SK-N-SH (cell line): ENCODE measurements at regions of chr17 and their contacts with region 1.

Region 1: GRCh38 chr17:67475236-67475937 is 98.3 kb downstream of the PITPNC1 start:
- DNase-seq: peak; percentile 84
- H3K4me3 ChIP-seq: no peak overlapping the region
- H3K27ac ChIP-seq: peak overlapping the region; percentile 11 to 42; a peak in 2 of 4 replicates
- H3K4me1 ChIP-seq: peaks cover 4 to 14% of the 10 kb centered on the region in 2 experiments; a peak in 3 of 4 replicates
- H3K27me3 ChIP-seq: no peaks in the 10 kb centered on the region
- CTCF ChIP-seq: peak; percentile 99
- EP300 ChIP-seq: no peak
- RAD21 ChIP-seq: peak; percentile 100

Region 2: DNA sequence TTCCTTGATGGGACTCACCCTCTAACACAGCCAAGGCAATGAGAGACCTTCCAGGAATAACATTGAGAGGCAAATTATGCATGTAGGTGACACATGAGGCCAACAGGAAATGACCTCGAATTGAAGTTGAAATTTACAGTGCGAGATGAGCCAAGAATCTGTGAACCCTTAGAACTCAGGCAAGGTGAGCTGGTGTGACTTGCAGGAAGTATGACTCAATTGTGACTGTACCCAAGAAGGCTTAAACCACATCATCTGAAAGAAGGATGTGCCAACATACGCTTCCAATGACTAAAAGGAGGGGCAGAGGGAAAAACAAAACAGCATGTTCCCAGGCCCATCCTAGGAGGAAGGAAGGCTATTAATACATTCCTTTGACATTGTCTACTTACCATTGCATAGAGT is 53.5 kb before region 1 on chr17:
- CTCF ChIA-PET with region 1: interaction called, 17 read pairs
- POLR2A ChIA-PET with region 1: no interaction called
- DNase-seq: no peak
- H3K4me3 ChIP-seq: no peak overlapping the region
- H3K27ac ChIP-seq: peak overlapping the region in 1 of 2 experiments; percentile 89; a peak in 2 of 4 replicates
- H3K4me1 ChIP-seq: peaks cover 2 to 16% of the 10 kb centered on the region in 2 experiments; a peak in 2 of 4 replicates
- H3K27me3 ChIP-seq: no peaks in the 10 kb centered on the region
- CTCF ChIP-seq: no peak
- EP300 ChIP-seq: peak in 1 of 2 experiments; percentile 96; a peak in 2 of 4 replicates
- RAD21 ChIP-seq: no peak

Region 3: GRCh38 chr17:67449845-67450755 is 25.3 kb before region 1 on chr17:
- CTCF ChIA-PET with region 1: interaction called, 35 read pairs
- POLR2A ChIA-PET with region 1: no interaction called
- DNase-seq: no peak
- H3K4me3 ChIP-seq: no peak overlapping the region
- H3K27ac ChIP-seq: no peak overlapping the region
- H3K4me1 ChIP-seq: peaks cover 0 to under 1% of the 10 kb centered on the region in 2 experiments; a peak in 2 of 4 replicates
- H3K27me3 ChIP-seq: no peaks in the 10 kb centered on the region
- CTCF ChIP-seq: no peak
- EP300 ChIP-seq: no peak
- RAD21 ChIP-seq: no peak

Region 4: DNA sequence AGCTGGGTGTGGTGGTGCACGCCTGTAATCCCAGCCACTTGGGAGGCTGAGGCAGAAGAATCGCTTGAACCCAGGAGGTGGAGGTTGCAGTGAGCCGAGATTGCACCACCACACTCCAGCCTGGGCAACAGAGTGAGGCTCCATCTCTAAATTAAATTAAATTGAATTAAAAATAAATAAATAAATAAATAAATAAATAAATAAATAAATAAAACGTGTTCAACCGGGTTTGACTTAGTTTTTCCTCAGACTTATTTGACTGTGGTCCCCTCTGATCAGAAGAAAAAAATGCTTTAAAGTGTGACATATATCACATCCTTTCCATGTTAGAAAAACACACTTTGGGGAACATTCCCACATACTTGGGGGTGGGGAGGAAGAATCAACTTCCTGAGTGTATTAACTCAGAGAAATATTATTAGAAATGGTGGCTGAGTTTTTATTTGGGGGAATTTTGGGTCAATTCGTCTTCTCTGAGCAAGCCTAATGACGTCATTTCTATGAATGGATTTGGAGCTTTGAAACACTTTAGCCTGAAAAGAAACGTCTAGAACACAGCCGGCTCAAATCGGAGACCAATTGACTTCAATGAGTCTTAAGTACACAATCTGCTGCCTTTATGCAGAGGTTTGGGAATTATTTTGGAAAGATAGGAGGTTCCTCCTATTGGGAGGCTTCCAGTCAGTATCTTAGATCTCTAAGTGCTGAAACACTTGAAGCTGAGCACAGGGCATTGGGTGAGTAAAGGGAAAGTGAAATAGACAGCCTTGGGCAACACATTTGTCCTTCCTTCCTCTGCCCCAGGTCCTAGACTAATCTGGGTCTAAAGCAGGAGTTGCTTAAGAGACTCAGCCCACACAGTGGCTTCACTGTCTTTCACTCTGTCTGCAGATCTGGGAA is 34.3 kb after region 1 on chr17:
- CTCF ChIA-PET with region 1: interaction called, 15 read pairs
- POLR2A ChIA-PET with region 1: no interaction called
- DNase-seq: no peak
- H3K4me3 ChIP-seq: no peak overlapping the region
- H3K27ac ChIP-seq: no peak overlapping the region
- H3K4me1 ChIP-seq: no peaks in the 10 kb centered on the region
- H3K27me3 ChIP-seq: no peaks in the 10 kb centered on the region
- CTCF ChIP-seq: no peak
- EP300 ChIP-seq: no peak
- RAD21 ChIP-seq: no peak

Region 5: DNA sequence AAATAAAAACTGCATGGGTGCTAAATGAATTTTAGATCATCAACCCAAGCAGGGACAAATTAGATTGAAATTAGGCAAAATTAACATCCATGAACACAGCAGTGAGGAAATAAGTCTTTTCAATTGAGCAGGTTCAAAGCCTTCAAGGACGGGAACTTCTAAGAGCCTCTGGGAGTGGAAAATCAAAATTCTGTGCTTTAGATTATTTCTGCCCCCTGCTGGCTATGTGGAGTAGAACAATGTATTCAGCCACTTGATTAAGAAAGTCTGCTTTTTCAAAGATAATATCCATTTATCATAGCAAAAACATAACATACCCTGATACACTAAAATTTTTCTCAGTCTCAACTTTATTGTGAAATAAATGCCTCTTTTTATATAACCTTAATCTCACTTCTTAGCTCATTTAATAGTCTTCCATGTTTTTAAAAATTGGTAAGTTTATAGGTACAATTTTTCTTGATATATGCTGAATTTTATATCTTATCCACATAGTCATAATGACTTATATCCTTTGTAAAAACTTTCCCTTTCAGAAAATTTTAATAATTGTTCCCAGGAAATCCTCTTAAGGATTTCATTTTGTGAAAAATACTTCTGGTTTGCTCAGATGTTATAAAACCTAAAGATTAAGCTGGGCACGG is 214.3 kb after region 1 on chr17:
- CTCF ChIA-PET with region 1: interaction called, 22 read pairs
- POLR2A ChIA-PET with region 1: no interaction called
- DNase-seq: peak; percentile 77
- H3K4me3 ChIP-seq: no peak overlapping the region
- H3K27ac ChIP-seq: peak overlapping the region in 1 of 2 experiments; percentile 2; a peak in 1 of 4 replicates
- H3K4me1 ChIP-seq: no peaks in the 10 kb centered on the region
- H3K27me3 ChIP-seq: no peaks in the 10 kb centered on the region
- CTCF ChIP-seq: peak; percentile 99
- EP300 ChIP-seq: no peak
- RAD21 ChIP-seq: peak; percentile 93